SK-N-SH (cell line): ENCODE measurements at regions of chr11 and their contacts with region 1.

Region 1: GRCh38 chr11:121722431-121723245 is 269.9 kb upstream of the SORL1-AS1 start:
- DNase-seq: peak; percentile 82
- H3K4me3 ChIP-seq: peak overlapping the region in 1 of 2 experiments; percentile 28; a peak in 1 of 4 replicates
- H3K27ac ChIP-seq: peak overlapping the region in 1 of 2 experiments; percentile 89; a peak in 2 of 4 replicates
- H3K4me1 ChIP-seq: peaks cover 8 to 14% of the 10 kb centered on the region in 2 experiments; a peak in 2 of 4 replicates
- H3K27me3 ChIP-seq: no peaks in the 10 kb centered on the region
- CTCF ChIP-seq: no peak
- EP300 ChIP-seq: peak in 1 of 2 experiments; percentile 65; a peak in 2 of 4 replicates
- RAD21 ChIP-seq: peak; percentile 31; the same call in 1 of the 2 replicates

Region 2: GRCh38 chr11:121671283-121672168 is 51.1 kb before region 1 on chr11:
- CTCF ChIA-PET with region 1: no interaction called
- POLR2A ChIA-PET with region 1: interaction called, 14 read pairs
- DNase-seq: peak; percentile 65
- H3K4me3 ChIP-seq: no peak overlapping the region
- H3K27ac ChIP-seq: peak overlapping the region in 1 of 2 experiments; percentile 99; a peak in 2 of 4 replicates
- H3K4me1 ChIP-seq: peaks cover 13 to 47% of the 10 kb centered on the region in 2 experiments; a peak in 3 of 4 replicates
- H3K27me3 ChIP-seq: no peaks in the 10 kb centered on the region
- CTCF ChIP-seq: no peak
- EP300 ChIP-seq: peak in 1 of 2 experiments; percentile 60; a peak in 1 of 4 replicates
- RAD21 ChIP-seq: no peak

Region 3: GRCh38 chr11:122020902-122021301 is 298.3 kb after region 1 on chr11:
- CTCF ChIA-PET with region 1: no interaction called
- POLR2A ChIA-PET with region 1: no interaction called
- DNase-seq: peak; percentile 8
- H3K4me3 ChIP-seq: no peak overlapping the region
- H3K27ac ChIP-seq: no peak overlapping the region
- H3K4me1 ChIP-seq: peaks cover 3 to 12% of the 10 kb centered on the region in 2 experiments; a peak in 3 of 4 replicates
- H3K27me3 ChIP-seq: no peaks in the 10 kb centered on the region
- CTCF ChIP-seq: peak; percentile 68
- EP300 ChIP-seq: no peak
- RAD21 ChIP-seq: peak; percentile 68